ENCODE measurements at regions of chr10 and their contacts with region 1.

Region 1: GRCh38 chr10:35347121-35347562 is 10.8 kb downstream of the CCNY start:
- DNase-seq: no peak
- ATAC-seq: no peak
- H3K4me3 ChIP-seq: no peak overlapping the region
- H3K27ac ChIP-seq: no peak overlapping the region
- H3K4me1 ChIP-seq: peaks cover 82% of the 10 kb centered on the region
- H3K27me3 ChIP-seq: no peaks in the 10 kb centered on the region
- CTCF ChIP-seq: no peak
- EP300 ChIP-seq: no peak
- POLR2A ChIP-seq: no peak
- RAD21 ChIP-seq: no peak

Region 2: DNA sequence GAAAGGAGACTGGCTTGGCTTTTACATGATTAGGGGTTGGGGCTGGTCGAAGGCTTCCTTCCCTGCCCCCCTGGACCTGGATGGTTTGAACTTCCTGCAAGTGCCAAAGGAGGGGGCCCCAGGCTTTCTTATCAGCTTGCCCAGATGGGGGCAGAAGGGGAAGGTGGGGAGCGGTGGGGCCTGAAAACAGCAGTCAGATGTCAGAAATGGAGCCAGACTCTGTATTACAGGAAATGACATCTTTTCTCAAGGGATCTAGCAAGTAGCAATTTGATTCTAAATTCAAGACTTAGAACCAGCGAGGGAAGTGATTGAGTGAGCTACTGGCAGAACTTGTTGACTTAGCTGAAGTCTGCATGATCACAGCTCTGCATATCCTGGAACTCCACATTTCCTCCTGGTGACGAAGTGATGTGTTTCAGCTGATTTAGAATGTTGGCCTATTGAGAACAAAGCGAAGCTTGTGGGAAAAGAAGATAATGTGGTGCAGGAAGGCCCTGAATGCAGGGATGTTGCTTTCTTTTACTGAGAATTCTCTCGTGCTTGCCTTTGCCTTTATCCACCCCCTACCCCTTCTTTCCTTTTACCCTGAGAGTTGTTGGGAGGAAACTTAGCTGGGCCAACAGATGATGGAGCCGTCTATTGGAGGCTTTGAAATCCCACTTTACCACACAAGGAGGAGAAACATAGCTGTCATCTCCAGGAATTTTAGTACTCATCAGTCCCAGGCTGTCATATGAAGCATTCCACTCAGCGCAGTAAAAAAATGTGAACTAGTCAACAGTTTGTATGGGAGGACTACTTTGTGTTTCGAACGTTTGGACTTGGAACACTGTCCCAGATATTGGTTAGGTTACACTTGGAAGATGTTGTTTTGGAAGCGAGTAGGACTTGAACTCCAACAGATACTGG is 32.3 kb after region 1 on chr10:
- CTCF ChIA-PET with region 1: no interaction called
- POLR2A ChIA-PET with region 1: no interaction called
- in situ Hi-C with region 1: no loop called
- intact Hi-C with region 1: loop called (anchors 5 kb)
- DNase-seq: no peak
- ATAC-seq: peak; percentile 41; the same call in 2 of the 3 replicates
- H3K4me3 ChIP-seq: no peak overlapping the region
- H3K27ac ChIP-seq: no peak overlapping the region
- H3K4me1 ChIP-seq: peaks cover 25% of the 10 kb centered on the region
- H3K27me3 ChIP-seq: no peaks in the 10 kb centered on the region
- CTCF ChIP-seq: 0 out of 2 replicates have a peak, but pooled peaks have one; percentile 15
- EP300 ChIP-seq: no peak
- POLR2A ChIP-seq: no peak
- RAD21 ChIP-seq: no peak

Region 3: GRCh38 chr10:35707642-35708420 is 360.7 kb after region 1 on chr10:
- CTCF ChIA-PET with region 1: no interaction called
- POLR2A ChIA-PET with region 1: no interaction called
- in situ Hi-C with region 1: no loop called
- intact Hi-C with region 1: no loop called
- DNase-seq: no peak
- ATAC-seq: no peak
- H3K4me3 ChIP-seq: no peak overlapping the region
- H3K27ac ChIP-seq: no peak overlapping the region
- H3K4me1 ChIP-seq: no peaks in the 10 kb centered on the region
- H3K27me3 ChIP-seq: peaks cover 0 to 14% of the 10 kb centered on the region in 2 experiments; a peak in 2 of 5 replicates
- CTCF ChIP-seq: no peak
- EP300 ChIP-seq: no peak
- POLR2A ChIP-seq: no peak
- RAD21 ChIP-seq: no peak

Region 4: GRCh38 chr10:36899651-36900050 is 1552.5 kb after region 1 on chr10:
- CTCF ChIA-PET with region 1: no interaction called
- POLR2A ChIA-PET with region 1: no interaction called
- in situ Hi-C with region 1: no loop called
- intact Hi-C with region 1: no loop called
- DNase-seq: no peak
- ATAC-seq: peak; percentile 77
- H3K4me3 ChIP-seq: no peak overlapping the region
- H3K27ac ChIP-seq: no peak overlapping the region
- H3K4me1 ChIP-seq: no peaks in the 10 kb centered on the region
- H3K27me3 ChIP-seq: no peaks in the 10 kb centered on the region
- CTCF ChIP-seq: no peak
- EP300 ChIP-seq: no peak
- POLR2A ChIP-seq: no peak
- RAD21 ChIP-seq: no peak

Measured in HepG2 (cell line).